ENCODE measurements at regions of chr1 and their contacts with region 1.

Region 1: GRCh38 chr1:45303582-45304310 is 22.9 kb upstream of the HPDL start:
- DNase-seq: peak; percentile 91 to 98 (median 96)
- ATAC-seq: peak; percentile 85 to 91 (median 89)
- H3K4me3 ChIP-seq: peak overlapping the region; percentile 54 to 62
- H3K4me3 Mint-ChIP-seq: peak overlapping the region; percentile 88 to 90 (median 90)
- H3K27ac ChIP-seq: peak overlapping the region; percentile 94
- H3K27ac Mint-ChIP-seq: peak overlapping the region; percentile 96 to 98
- H3K4me1 ChIP-seq: peaks cover 2 to 18% of the 10 kb centered on the region in 2 experiments
- H3K4me1 Mint-ChIP-seq: peaks cover 19 to 32% (median 20%) of the 10 kb centered on the region in 3 donors
- H3K27me3 ChIP-seq: no peaks in the 10 kb centered on the region
- H3K27me3 Mint-ChIP-seq: no peaks in the 10 kb centered on the region

Region 2: DNA sequence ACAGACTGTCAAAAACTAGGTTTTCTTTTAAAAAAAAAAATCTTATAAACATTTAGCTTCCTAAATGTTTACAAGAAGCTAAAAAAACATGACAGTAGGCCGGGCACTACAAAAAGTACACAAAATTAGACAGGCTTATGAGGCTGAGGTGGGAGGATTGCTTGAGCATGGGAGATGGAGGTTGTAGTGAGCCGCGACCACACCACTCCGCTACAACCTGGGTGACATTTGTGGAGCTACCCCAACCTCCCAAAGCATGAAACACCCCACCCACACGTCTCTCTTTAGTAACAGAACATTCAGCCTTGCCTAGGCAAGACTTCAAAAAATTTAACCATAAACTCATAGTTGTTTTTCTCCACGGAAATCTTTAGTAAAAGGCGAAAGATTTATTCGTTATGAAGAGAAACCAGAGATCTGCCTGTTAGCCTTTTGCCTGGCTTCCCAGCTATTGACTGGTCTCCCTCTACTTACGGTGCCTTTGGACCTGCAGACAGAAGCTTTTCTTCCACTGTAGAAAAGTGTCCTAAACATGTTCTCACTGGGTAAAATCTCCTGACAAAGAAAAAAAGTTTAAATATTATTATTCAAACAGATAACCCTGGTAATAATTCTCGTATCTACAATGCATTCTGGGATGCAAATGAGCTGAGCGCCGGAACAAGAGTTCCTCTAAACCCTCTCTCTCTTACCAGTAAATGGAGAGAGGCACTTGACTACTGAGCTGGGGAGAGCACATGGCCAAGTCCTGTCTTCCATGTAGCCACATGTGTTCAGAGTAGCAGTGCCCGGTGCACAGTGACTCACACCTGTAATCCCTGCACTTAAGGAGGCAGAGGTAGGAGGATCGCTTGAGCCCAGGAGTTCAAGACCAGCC is 582.0 kb before region 1 on chr1:
- CTCF ChIA-PET with region 1: interaction called in 1 of 2 experiments, 7 read pairs
- POLR2A ChIA-PET with region 1: interaction called in 1 of 2 experiments, 18 read pairs
- DNase-seq: peak in 33 of 35 experiments; percentile 29 to 86 (median 65)
- ATAC-seq: peak; percentile 78 to 89 (median 78)
- H3K4me3 ChIP-seq: peak overlapping the region in 1 of 2 donors; percentile 1
- H3K4me3 Mint-ChIP-seq: peak overlapping the region; percentile 57 to 76 (median 69)
- H3K27ac ChIP-seq: peak overlapping the region; percentile 85
- H3K27ac Mint-ChIP-seq: peak overlapping the region; percentile 96 to 99
- H3K4me1 ChIP-seq: peaks cover 32 to 77% of the 10 kb centered on the region in 2 experiments
- H3K4me1 Mint-ChIP-seq: peaks cover 68 to 74% (median 71%) of the 10 kb centered on the region in 3 donors
- H3K27me3 ChIP-seq: peaks cover 0 to 3% of the 10 kb centered on the region in 2 experiments
- H3K27me3 Mint-ChIP-seq: no peaks in the 10 kb centered on the region

Region 3: GRCh38 chr1:45011837-45012638 is 291.7 kb before region 1 on chr1 and contains the start of gene UROD:
- CTCF ChIA-PET with region 1: interaction called, 10 to 124 read pairs
- POLR2A ChIA-PET with region 1: interaction called in 1 of 2 experiments, 32 read pairs
- DNase-seq: peak; percentile 69 to 95 (median 89)
- ATAC-seq: peak; percentile 79 to 86 (median 80)
- H3K4me3 ChIP-seq: peak within 1 kb of the TSS; percentile 71 to 90
- H3K4me3 Mint-ChIP-seq: peak within 1 kb of the TSS; percentile 82 to 94 (median 90)
- H3K27ac ChIP-seq: peak within 1 kb of the TSS; percentile 81
- H3K27ac Mint-ChIP-seq: peak within 1 kb of the TSS; percentile 88 to 91
- H3K4me1 ChIP-seq: peaks cover 21 to 54% of the 10 kb centered on the region in 2 experiments
- H3K4me1 Mint-ChIP-seq: peaks cover 51 to 59% (median 55%) of the 10 kb centered on the region in 3 donors
- H3K27me3 ChIP-seq: no peaks in the 10 kb centered on the region
- H3K27me3 Mint-ChIP-seq: no peaks in the 10 kb centered on the region
- total RNA-seq, gene UROD: 52.0 to 58.6 (median 57.3) TPM

Region 4: GRCh38 chr1:45334308-45335245 is 30.8 kb after region 1 on chr1:
- CTCF ChIA-PET with region 1: interaction called, 5 to 39 read pairs
- POLR2A ChIA-PET with region 1: interaction called, 12 to 23 read pairs
- DNase-seq: no peak
- ATAC-seq: no peak
- H3K4me3 ChIP-seq: no peak overlapping the region
- H3K4me3 Mint-ChIP-seq: no peak overlapping the region
- H3K27ac ChIP-seq: no peak overlapping the region
- H3K27ac Mint-ChIP-seq: no peak overlapping the region
- H3K4me1 ChIP-seq: peaks cover 0 to 18% of the 10 kb centered on the region in 2 experiments
- H3K4me1 Mint-ChIP-seq: peaks cover 42 to 46% (median 44%) of the 10 kb centered on the region in 3 donors
- H3K27me3 ChIP-seq: no peaks in the 10 kb centered on the region
- H3K27me3 Mint-ChIP-seq: no peaks in the 10 kb centered on the region

Region 5: GRCh38 chr1:45442272-45442671 is 138.5 kb after region 1 on chr1:
- CTCF ChIA-PET with region 1: no interaction called
- POLR2A ChIA-PET with region 1: no interaction called
- DNase-seq: no peak
- ATAC-seq: no peak
- H3K4me3 ChIP-seq: no peak overlapping the region
- H3K4me3 Mint-ChIP-seq: no peak overlapping the region
- H3K27ac ChIP-seq: no peak overlapping the region
- H3K27ac Mint-ChIP-seq: no peak overlapping the region
- H3K4me1 ChIP-seq: no peaks in the 10 kb centered on the region
- H3K4me1 Mint-ChIP-seq: no peaks in the 10 kb centered on the region
- H3K27me3 ChIP-seq: no peaks in the 10 kb centered on the region
- H3K27me3 Mint-ChIP-seq: no peaks in the 10 kb centered on the region

Region 6: DNA sequence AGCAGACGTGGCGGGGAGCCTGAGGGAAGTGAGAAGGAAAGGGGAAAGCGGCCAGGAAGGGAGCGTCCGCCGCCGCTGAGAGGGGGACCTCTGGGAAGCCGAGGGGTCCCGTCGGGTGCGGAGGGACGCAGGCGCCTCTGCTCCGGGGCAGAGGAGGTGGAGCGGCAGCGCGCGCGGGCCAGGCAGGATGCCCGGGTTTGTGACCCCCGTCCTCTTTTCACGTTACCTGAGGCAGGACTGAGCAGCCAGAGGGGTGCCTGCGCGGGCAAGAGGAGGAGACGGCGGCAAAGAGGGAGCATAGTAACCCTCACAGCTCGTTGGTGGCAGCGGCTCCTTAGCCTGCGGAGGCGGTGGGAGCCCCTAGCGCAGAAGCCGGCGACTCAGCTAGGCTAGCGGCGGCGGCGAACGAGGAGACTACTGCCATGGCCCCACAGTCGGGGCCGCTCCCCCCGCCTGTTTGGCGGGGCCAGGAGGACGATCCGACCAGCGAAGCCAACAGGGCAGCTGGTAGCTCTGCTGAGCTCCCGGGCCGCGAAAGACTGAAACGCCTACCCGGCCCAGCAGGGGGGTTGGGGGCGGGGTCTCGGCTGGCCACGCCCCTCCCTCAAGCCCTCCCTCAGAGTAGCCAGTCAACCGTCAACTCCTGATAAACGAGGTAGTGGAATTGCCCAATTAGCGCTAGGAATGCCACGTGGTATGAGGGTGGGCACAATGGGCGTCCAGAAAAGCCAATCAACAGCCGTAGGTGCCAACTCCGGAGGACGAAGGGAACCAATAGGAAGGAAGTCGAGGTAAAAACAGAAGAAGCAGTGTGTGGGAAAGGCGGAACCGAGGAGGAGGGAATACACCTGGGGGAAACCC is 187.1 kb after region 1 on chr1 and contains the start of gene TESK2:
- CTCF ChIA-PET with region 1: interaction called, 5 to 20 read pairs
- POLR2A ChIA-PET with region 1: interaction called in 1 of 2 experiments, 3 read pairs
- DNase-seq: peak; percentile 87 to 99 (median 96)
- ATAC-seq: peak; percentile 90 to 94 (median 94)
- H3K4me3 ChIP-seq: peak within 1 kb of the TSS; percentile 66 to 68
- H3K4me3 Mint-ChIP-seq: no peak within 1 kb of the TSS
- H3K27ac ChIP-seq: peak within 1 kb of the TSS; percentile 67
- H3K27ac Mint-ChIP-seq: no peak within 1 kb of the TSS
- H3K4me1 ChIP-seq: peaks cover 2 to 19% of the 10 kb centered on the region in 2 experiments
- H3K4me1 Mint-ChIP-seq: peaks cover 6 to 13% (median 9%) of the 10 kb centered on the region in 3 donors
- H3K27me3 ChIP-seq: no peaks in the 10 kb centered on the region
- H3K27me3 Mint-ChIP-seq: no peaks in the 10 kb centered on the region
- total RNA-seq, gene TESK2: 4.3 to 7.9 (median 5.5) TPM